ENCODE measurements at regions of chr18 and their contacts with region 1.

Region 1: DNA sequence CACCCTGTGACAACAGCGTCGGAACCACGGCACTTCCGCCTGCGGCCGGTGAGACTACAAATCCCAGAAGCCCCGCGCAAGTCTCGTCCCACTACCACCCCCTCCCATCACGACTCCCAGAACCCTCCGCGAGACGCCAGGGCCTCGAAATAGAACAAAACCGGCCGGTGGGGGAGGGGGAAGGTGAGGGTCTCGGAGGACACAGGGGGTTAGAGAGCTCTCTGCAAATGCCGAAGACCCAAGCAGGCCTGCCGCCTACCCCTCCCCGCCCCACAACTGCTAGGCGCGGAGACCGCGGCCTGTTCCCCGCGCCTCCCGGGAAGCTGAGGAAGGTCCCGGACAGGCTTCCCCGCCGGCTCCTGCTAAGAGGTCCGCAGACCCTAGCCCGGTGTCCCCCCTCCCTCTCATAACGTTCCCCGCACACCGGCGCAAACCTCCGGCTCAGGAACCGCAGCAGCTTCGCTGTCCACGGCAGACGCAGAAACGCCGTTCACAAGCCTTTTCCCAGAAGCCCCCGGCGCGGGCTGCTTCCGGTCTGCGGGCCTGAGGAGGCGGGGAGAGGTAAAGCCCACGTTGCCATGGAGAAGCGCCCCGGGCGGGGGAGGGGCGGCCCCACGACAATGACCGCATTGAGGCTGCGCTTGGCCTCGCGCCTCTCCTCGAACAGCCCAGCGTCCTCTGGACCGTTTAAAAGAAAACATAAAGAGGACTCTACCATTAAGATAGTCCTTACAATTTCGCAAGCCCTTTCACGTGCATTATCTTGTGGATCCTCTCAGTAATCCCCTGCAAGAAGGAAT is at the start of gene ZNF24:
- DNase-seq: peak; percentile 98
- H3K4me3 ChIP-seq: peak within 1 kb of the TSS; percentile 77 to 96 (median 94)
- H3K27ac ChIP-seq: peak within 1 kb of the TSS; percentile 95 to 99 (median 99)
- H3K4me1 ChIP-seq: peaks cover 0 to 56% (median 28%) of the 10 kb centered on the region in 4 donors
- H3K27me3 ChIP-seq: no peaks in the 10 kb centered on the region
- CTCF ChIP-seq: no peak
- EP300 ChIP-seq: peak in 2 of 4 donors; percentile 23 to 49
- POLR2A ChIP-seq: peak; percentile 66 to 78
- total RNA-seq, gene ZNF24: 32.4 to 49.4 (median 42.9) TPM

Region 2: GRCh38 chr18:35029770-35030169 is 314.4 kb before region 1 on chr18:
- intact Hi-C with region 1: loop called (anchors 10 kb)
- DNase-seq: no peak
- H3K4me3 ChIP-seq: peak overlapping the region in 3 of 4 donors; percentile 18 to 25 (median 22)
- H3K27ac ChIP-seq: peak overlapping the region in 3 of 4 donors; percentile 7 to 46 (median 32)
- H3K4me1 ChIP-seq: peaks cover 0 to 31% (median 23%) of the 10 kb centered on the region in 4 donors
- H3K27me3 ChIP-seq: no peaks in the 10 kb centered on the region
- CTCF ChIP-seq: no peak
- EP300 ChIP-seq: no peak
- POLR2A ChIP-seq: no peak

Region 3: DNA sequence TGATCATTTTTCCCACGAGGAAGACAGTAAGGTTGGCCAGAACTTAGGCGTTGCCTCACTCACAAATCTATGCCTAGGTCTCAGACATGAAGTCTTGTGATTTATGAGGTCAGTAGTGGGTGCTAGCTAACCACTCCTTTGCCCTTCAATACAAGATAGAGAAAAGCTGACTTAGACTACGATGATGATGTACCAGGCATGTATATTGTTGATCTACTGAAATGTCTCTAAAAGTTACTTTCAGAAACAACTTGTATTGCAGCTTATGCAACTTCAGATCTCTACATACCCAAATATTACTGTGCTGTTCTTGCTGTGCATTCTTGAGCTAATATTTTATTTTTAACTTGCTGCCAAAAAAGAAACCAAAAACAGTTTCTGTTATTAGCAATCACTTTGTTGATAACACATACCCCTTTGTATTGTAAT is 272.3 kb before region 1 on chr18:
- intact Hi-C with region 1: no loop called
- DNase-seq: no peak
- H3K4me3 ChIP-seq: no peak overlapping the region
- H3K27ac ChIP-seq: no peak overlapping the region
- H3K4me1 ChIP-seq: peaks cover 0 to 15% (median 7%) of the 10 kb centered on the region in 4 donors
- H3K27me3 ChIP-seq: no peaks in the 10 kb centered on the region
- CTCF ChIP-seq: no peak
- EP300 ChIP-seq: no peak
- POLR2A ChIP-seq: no peak

Region 4: DNA sequence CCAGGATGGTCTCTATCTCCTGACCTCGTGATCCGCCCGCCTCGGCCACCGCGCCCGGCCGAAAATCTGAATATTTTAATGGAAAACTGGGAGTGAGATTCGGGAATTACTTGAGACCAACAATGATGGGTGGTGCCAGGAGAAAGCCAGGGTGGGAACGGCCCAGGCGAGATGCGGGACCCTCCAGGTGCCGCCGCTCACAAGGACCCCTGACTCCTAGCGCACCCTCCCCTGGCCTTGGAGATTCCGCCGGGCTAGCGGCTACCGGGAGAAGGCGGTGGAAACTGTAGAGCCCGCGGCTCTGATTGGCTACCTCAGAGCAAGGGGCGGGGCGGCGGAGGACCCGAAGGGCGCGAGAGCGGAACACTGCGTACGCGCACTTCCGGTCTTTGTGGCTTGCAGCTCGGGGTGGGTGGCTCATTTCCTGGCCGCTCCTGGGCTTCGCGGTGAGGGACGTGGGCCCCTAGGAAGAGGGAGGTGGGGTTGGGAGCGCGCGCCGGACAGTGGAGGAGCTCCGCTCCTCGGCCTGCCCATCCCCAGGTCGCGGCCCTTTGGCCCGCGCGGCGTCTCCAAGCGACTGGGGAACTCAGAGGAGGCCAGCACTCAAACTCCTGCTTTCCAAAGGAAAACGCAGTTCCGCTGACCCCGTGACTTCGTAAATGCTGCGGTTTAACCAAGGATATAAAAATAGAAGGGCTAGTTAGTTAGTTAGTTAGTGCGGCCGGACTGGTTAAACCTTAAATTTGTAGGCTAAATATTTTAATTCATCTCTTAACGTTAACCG is 103.3 kb before region 1 on chr18 and contains the start of gene ZNF397:
- intact Hi-C with region 1: loop called (anchors 1 kb)
- DNase-seq: peak; percentile 99
- H3K4me3 ChIP-seq: peak within 1 kb of the TSS; percentile 67 to 85 (median 78)
- H3K27ac ChIP-seq: peak within 1 kb of the TSS; percentile 96 to 98 (median 98)
- H3K4me1 ChIP-seq: peaks cover 0 to 15% (median 13%) of the 10 kb centered on the region in 4 donors
- H3K27me3 ChIP-seq: no peaks in the 10 kb centered on the region
- CTCF ChIP-seq: no peak
- EP300 ChIP-seq: no peak
- POLR2A ChIP-seq: peak; percentile 93 to 95
- total RNA-seq, gene ZNF397: 25.5 to 33.2 (median 31.5) TPM

Region 5: GRCh38 chr18:35267161-35267651 is 76.9 kb before region 1 on chr18:
- intact Hi-C with region 1: loop called (anchors 1 kb)
- DNase-seq: peak; percentile 93
- H3K4me3 ChIP-seq: peak overlapping the region; percentile 66 to 75 (median 72)
- H3K27ac ChIP-seq: peak overlapping the region; percentile 85 to 89 (median 87)
- H3K4me1 ChIP-seq: peaks cover 0 to 6% (median 5%) of the 10 kb centered on the region in 4 donors
- H3K27me3 ChIP-seq: no peaks in the 10 kb centered on the region
- CTCF ChIP-seq: no peak
- EP300 ChIP-seq: peak in 1 of 4 donors; percentile 6
- POLR2A ChIP-seq: peak; percentile 8 to 16

Region 6: GRCh38 chr18:35290073-35290735 is 53.9 kb before region 1 on chr18 and contains the start of gene ZSCAN30:
- intact Hi-C with region 1: loop called (anchors 2 kb)
- DNase-seq: peak; percentile 97
- H3K4me3 ChIP-seq: peak within 1 kb of the TSS; percentile 51 to 78 (median 74)
- H3K27ac ChIP-seq: peak within 1 kb of the TSS; percentile 77 to 89 (median 86)
- H3K4me1 ChIP-seq: peaks cover 0 to 33% (median 23%) of the 10 kb centered on the region in 4 donors
- H3K27me3 ChIP-seq: no peaks in the 10 kb centered on the region
- CTCF ChIP-seq: no peak
- EP300 ChIP-seq: peak in 2 of 4 donors; percentile 26 to 36
- POLR2A ChIP-seq: peak; percentile 36 to 55
- total RNA-seq, gene ZSCAN30: 12.5 to 25.8 (median 18.6) TPM

Region 7: GRCh38 chr18:35376742-35377695 is 32.9 kb after region 1 on chr18 and contains the start of gene ZNF396:
- intact Hi-C with region 1: loop called (anchors 2 kb)
- DNase-seq: peak; percentile 92
- H3K4me3 ChIP-seq: peak within 1 kb of the TSS; percentile 60 to 91 (median 83)
- H3K27ac ChIP-seq: peak within 1 kb of the TSS in 3 of 4 donors; percentile 56 to 68 (median 62)
- H3K4me1 ChIP-seq: peaks cover 0 to 11% (median 5%) of the 10 kb centered on the region in 4 donors
- H3K27me3 ChIP-seq: no peaks in the 10 kb centered on the region
- CTCF ChIP-seq: no peak
- EP300 ChIP-seq: no peak
- POLR2A ChIP-seq: no peak
- total RNA-seq, gene ZNF396: 1.9 to 3.3 (median 2.2) TPM

Measured in sigmoid colon (tissue), 7 donors.